CD4-positive, alpha-beta T cell (primary cell): ENCODE measurements at regions of chr15 and their contacts with region 1.

Region 1: DNA sequence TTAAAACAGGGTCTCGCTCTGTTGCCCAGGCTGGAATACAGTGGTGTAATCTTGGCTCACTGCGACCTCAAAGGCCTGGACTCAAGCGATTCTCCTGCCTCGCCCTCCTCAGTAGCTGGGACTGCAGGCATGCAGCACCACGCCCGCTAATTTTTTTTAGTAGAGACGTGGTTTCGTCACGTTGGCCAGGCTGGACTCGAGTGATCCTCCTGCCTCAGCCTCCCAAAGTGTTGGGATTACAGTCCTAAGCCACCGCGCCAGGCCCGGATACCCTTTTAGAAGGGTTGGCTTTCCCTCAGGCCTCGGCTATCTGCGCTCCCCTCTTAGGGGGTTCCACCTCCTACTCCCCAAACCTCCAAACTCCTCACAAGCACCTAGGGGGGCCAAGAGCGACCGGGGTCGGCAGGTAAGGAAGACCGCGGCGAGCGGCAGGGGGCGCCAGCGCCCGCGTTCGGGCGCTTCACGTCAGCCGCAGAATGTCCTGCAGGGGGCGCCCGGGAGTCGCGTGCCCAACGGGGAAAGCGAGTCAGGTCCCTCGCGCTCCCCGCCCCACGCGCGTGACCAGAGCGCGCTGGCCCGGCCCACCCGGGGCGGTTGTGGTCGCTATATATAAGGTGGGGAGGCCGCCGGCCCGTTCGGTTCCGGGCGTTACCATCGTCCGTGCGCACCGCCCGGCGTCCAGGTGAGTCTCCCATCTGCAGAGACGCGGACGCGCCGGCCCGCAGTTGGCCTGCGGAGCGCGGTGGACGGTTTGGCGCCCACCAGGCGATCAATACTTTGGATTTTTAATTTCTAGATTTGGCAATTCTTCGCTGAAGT is 51.8 kb upstream of the GATM start:
- DNase-seq: peak; percentile 74 to 94 (median 84)
- ATAC-seq: peak; percentile 95
- H3K4me3 ChIP-seq: peak overlapping the region; percentile 45
- H3K4me3 Mint-ChIP-seq: no peak overlapping the region
- H3K27ac ChIP-seq: no peak overlapping the region
- H3K27ac Mint-ChIP-seq: no peak overlapping the region
- H3K4me1 ChIP-seq: peaks cover 10% of the 10 kb centered on the region
- H3K4me1 Mint-ChIP-seq: no peaks in the 10 kb centered on the region
- H3K27me3 ChIP-seq: peaks cover 0 to 6% of the 10 kb centered on the region in 2 experiments
- H3K27me3 Mint-ChIP-seq: peaks cover 3% of the 10 kb centered on the region
- CTCF ChIP-seq: peak; percentile 100

Region 2: DNA sequence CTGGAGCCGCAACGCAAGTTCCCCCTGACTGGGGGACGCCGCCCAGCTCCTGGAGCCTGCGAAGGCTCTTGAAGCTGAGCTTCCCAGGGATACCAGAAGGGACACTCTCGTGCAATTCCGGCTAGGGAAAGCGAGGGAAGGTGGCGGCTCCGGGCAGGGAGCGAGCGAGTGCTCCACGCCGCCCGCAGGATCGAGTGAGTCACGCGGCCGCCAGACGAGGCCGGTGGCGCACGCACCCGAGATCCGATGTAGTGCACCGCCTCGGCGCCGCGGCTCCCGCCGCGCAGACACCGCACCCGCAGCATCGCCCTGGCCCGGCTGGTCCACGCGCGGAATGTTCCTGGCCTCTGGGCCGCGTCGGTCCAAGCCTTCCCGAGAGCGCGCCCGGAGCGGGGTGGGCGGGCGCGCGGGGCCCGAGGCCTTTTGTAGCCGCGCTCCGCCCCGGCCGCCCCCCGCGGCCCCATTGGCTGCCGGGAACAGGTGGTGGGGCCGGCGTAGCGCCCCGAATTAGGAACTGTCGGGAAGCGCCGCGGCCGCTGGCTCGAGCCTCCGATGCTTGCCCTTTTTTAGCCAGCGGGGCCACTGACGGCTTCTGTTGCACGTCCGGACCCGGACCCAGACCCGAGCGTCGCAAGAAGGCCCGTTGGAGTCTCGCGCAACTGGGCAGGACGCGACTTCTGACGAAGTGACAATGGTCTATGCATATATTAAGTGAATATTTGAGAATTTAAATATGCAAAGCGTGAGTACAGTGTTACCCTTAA is 51.9 kb before region 1 on chr15 and contains the start of gene GATM:
- CTCF ChIA-PET with region 1: no interaction called
- POLR2A ChIA-PET with region 1: no interaction called
- intact Hi-C with region 1: no loop called
- DNase-seq: peak in 10 of 14 experiments; percentile 9 to 68 (median 36)
- ATAC-seq: peak; percentile 73
- H3K4me3 ChIP-seq: peak within 1 kb of the TSS; percentile 47
- H3K4me3 Mint-ChIP-seq: peak within 1 kb of the TSS; percentile 81
- H3K27ac ChIP-seq: no peak within 1 kb of the TSS
- H3K27ac Mint-ChIP-seq: no peak within 1 kb of the TSS
- H3K4me1 ChIP-seq: peaks cover 16% of the 10 kb centered on the region
- H3K4me1 Mint-ChIP-seq: peaks cover 29% of the 10 kb centered on the region
- H3K27me3 ChIP-seq: peaks cover 36 to 70% of the 10 kb centered on the region in 2 experiments
- H3K27me3 Mint-ChIP-seq: peaks cover 60% of the 10 kb centered on the region
- CTCF ChIP-seq: no peak
- total RNA-seq, gene GATM: 0.55 to 0.70 TPM

Region 3: GRCh38 chr15:45468294-45468693 is 38.1 kb after region 1 on chr15:
- CTCF ChIA-PET with region 1: no interaction called
- POLR2A ChIA-PET with region 1: no interaction called
- intact Hi-C with region 1: loop called in 1 of 2 experiments (anchors 5 kb)
- DNase-seq: no peak
- ATAC-seq: no peak
- H3K4me3 ChIP-seq: no peak overlapping the region
- H3K4me3 Mint-ChIP-seq: no peak overlapping the region
- H3K27ac ChIP-seq: no peak overlapping the region
- H3K27ac Mint-ChIP-seq: no peak overlapping the region
- H3K4me1 ChIP-seq: no peaks in the 10 kb centered on the region
- H3K4me1 Mint-ChIP-seq: no peaks in the 10 kb centered on the region
- H3K27me3 ChIP-seq: peaks cover 0 to 17% of the 10 kb centered on the region in 2 experiments
- H3K27me3 Mint-ChIP-seq: peaks cover 34% of the 10 kb centered on the region
- CTCF ChIP-seq: no peak

Region 4: DNA sequence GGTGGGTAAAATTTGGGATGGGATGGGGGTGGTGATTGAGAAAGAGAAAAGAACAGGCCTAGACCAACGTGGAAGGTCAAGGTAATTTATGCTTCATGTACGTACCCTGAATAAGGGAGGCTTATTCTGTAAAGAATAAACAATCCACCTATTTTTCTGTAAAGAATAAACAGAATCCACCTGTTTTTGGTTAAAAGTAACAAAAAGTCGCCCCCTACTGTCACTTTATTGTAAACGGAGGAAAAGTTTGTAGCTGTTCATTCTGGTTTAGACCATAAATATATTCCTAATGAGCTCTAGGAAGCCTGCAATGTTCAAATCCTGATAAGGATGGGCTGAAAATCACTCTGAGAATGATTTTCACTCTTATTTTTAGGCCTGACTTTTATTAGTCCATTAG is 181.1 kb after region 1 on chr15:
- CTCF ChIA-PET with region 1: interaction called, 3 read pairs
- POLR2A ChIA-PET with region 1: no interaction called
- intact Hi-C with region 1: loop called (anchors 1 to 2 kb)
- DNase-seq: peak in 3 of 14 experiments; percentile 30 to 37 (median 33)
- ATAC-seq: no peak
- H3K4me3 ChIP-seq: no peak overlapping the region
- H3K4me3 Mint-ChIP-seq: no peak overlapping the region
- H3K27ac ChIP-seq: no peak overlapping the region
- H3K27ac Mint-ChIP-seq: no peak overlapping the region
- H3K4me1 ChIP-seq: no peaks in the 10 kb centered on the region
- H3K4me1 Mint-ChIP-seq: no peaks in the 10 kb centered on the region
- H3K27me3 ChIP-seq: no peaks in the 10 kb centered on the region
- H3K27me3 Mint-ChIP-seq: no peaks in the 10 kb centered on the region
- CTCF ChIP-seq: peak; percentile 50